PC-3 (cell line): ENCODE measurements at regions of chr4 and their contacts with region 1.

Region 1: DNA sequence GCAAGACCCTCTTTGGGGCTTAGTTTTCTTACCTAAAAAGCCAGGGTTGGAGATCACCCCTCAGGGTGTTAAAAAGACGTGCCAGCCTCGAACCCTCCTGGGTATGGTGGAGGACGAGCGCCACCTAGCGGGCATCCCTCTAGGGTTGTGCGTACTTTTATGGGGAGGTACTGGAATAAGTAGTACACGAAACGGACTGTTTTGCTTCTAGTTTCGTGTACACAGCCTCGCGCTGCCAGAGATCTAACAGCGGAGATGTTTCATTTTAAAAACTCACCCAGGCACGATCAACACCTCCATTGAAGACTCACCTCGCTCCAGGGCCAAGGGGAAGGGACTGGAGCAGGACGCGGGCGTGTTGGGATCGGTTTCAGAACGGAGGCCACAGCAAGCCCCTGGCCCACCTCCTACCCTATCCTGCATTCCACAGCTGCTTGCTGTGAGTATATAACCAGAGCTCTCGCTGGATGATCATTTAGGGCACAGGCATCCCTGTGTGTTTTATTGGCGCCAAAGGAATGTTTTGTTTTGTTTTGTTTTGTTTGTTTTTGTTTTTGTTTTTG is 4.8 kb upstream of the NKX3-2 start:
- DNase-seq: peak; percentile 81
- ATAC-seq: peak; percentile 49
- H3K4me3 ChIP-seq: peak overlapping the region; percentile 90
- H3K27ac ChIP-seq: no peak overlapping the region
- H3K4me1 ChIP-seq: peaks cover 8% of the 10 kb centered on the region
- H3K27me3 ChIP-seq: peaks cover 25% of the 10 kb centered on the region
- CTCF ChIP-seq: peak; percentile 89

Region 2: DNA sequence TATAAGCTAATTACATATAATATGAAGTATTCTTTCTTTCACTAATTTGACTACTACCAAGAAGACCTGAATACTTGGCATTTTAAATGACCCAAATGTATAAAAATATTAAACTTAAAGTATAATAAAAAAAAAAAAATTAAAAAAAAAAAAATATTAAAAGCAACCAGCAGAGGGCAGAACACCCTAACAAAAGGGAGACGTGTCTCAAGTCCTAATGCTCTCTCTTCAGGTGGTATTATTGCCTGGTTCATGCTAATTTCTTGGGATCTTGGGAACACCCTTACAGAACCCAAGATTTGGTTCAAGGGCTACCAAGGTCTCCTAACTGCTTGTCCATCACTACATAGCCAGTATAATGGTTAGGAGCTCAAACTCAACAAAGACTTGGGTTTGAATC is 819.7 kb before region 1 on chr4:
- CTCF ChIA-PET with region 1: no interaction called
- POLR2A ChIA-PET with region 1: no interaction called
- intact Hi-C with region 1: loop called (anchors 2 kb)
- DNase-seq: peak; percentile 35
- ATAC-seq: no peak
- H3K4me3 ChIP-seq: no peak overlapping the region
- H3K27ac ChIP-seq: no peak overlapping the region
- H3K4me1 ChIP-seq: no peaks in the 10 kb centered on the region
- H3K27me3 ChIP-seq: no peaks in the 10 kb centered on the region
- CTCF ChIP-seq: peak; percentile 17; the same call in 1 of the 2 replicates

Region 3: DNA sequence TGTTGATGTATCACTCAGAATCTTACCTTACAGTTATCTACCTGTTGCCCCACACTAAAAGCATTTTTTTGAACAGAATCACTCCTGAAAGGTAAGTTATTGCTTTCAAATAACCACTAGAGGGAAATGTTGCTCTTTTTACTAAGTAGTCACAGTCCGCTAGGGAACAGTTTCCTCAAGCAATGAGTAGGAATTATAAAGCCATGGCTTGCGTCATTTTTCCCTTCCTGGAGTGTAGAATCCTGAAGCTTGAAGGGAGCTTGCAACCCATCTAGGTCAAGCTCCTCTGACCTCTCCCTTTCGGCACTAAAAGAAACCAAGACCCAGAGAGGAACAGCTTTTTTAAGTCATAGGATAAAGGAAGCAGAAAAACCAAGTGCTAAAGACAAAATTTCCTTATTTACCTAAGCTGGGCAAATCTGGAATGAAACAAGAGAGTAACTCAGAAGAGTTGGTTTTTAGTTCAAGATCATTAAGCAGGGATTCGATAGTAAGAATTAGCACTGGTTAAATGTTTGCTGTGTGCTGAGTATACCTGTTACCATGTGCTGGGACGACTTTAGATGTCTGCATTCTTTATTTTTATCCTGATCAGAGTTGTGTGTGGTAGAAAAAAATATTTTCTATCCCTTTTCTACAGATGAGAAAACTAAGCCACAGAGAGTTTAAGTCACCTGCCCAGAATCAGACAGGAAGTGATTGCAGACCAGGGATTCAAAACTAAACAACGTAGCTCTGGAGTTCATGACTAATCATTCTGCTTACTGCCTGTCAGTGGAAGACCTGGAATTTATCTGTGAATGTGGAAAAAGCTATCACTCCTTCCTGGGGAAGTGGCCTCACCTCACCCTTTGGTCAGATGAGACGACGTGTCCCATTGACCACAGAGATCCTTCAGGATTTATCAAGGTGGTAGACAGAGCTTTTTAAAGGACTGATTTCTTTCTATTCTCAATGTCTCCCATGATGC is 696.4 kb before region 1 on chr4:
- CTCF ChIA-PET with region 1: no interaction called
- POLR2A ChIA-PET with region 1: no interaction called
- intact Hi-C with region 1: loop called (anchors 1 kb)
- DNase-seq: peak; percentile 73
- ATAC-seq: peak; percentile 79
- H3K4me3 ChIP-seq: no peak overlapping the region
- H3K27ac ChIP-seq: no peak overlapping the region
- H3K4me1 ChIP-seq: no peaks in the 10 kb centered on the region
- H3K27me3 ChIP-seq: peaks cover 2% of the 10 kb centered on the region; the same call in 1 of the 2 replicates
- CTCF ChIP-seq: peak; percentile 70

Region 4: DNA sequence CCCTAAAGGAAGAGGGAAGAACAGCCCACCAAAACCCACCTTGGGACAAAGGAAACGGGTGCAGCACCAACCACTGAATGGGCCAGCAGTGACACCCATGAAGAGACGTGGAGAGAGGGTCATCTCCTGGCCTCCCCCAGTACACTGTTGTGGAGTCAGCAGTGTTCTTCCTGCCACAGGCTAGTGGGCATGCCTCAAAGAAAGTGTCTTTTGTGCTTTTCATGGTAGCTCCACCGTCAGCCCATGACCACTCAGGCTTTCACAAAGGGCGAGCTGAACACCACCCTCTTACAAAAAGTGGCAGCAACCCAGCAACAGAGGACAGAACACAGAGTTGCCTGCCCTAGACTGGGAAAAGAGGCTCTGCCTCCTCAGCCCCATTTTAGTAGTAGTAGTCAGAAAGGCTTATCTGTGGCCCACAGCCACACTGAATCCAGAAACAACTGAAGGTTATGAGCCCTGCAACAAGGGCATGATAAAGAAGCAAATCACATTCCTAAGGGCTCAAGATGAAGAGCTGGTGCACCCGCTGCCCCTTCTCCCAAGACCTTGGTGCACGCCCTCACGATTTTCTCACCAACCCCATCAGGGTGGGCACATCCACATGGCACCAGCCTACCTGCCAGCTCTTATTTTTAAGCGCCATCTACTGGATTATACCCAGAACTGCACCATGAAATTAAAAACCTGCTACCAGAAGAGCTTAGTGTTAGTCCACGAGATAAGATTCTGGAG is 118.1 kb before region 1 on chr4:
- CTCF ChIA-PET with region 1: no interaction called
- POLR2A ChIA-PET with region 1: no interaction called
- intact Hi-C with region 1: no loop called
- DNase-seq: peak; percentile 8
- ATAC-seq: no peak
- H3K4me3 ChIP-seq: no peak overlapping the region
- H3K27ac ChIP-seq: no peak overlapping the region
- H3K4me1 ChIP-seq: no peaks in the 10 kb centered on the region
- H3K27me3 ChIP-seq: no peaks in the 10 kb centered on the region
- CTCF ChIP-seq: peak; percentile 59

Region 5: GRCh38 chr4:13484122-13484748 is 64.8 kb before region 1 on chr4 and contains the start of gene RAB28:
- CTCF ChIA-PET with region 1: no interaction called
- POLR2A ChIA-PET with region 1: no interaction called
- intact Hi-C with region 1: loop called (anchors 5 kb)
- DNase-seq: peak; percentile 82
- ATAC-seq: peak; percentile 79
- H3K4me3 ChIP-seq: peak within 1 kb of the TSS; percentile 89
- H3K27ac ChIP-seq: peak within 1 kb of the TSS; percentile 74
- H3K4me1 ChIP-seq: peaks cover 18% of the 10 kb centered on the region
- H3K27me3 ChIP-seq: no peaks in the 10 kb centered on the region
- CTCF ChIP-seq: no peak
- total RNA-seq, gene RAB28: 4.9 and 10.4 TPM in 2 replicates

Region 6: DNA sequence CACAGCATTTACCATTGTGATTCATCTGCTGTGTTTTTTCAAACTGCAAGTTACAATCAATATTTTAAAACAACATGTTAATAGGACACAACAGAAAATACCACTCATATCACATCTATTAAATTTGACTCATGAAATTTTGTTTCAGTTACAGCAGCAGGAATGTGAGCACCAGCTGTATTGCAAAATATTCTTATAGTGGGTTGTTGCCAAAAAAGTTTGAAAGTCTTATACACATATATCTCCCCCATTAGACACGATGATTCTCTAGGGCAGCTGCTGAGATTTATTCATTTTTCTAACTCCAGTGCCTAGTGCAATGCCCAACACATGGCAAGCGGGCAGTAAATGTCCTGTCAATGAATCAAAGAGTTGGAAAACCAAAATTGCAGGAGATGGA is 21.9 kb after region 1 on chr4:
- CTCF ChIA-PET with region 1: no interaction called
- POLR2A ChIA-PET with region 1: no interaction called
- intact Hi-C with region 1: no loop called
- DNase-seq: no peak
- ATAC-seq: no peak
- H3K4me3 ChIP-seq: no peak overlapping the region
- H3K27ac ChIP-seq: no peak overlapping the region
- H3K4me1 ChIP-seq: no peaks in the 10 kb centered on the region
- H3K27me3 ChIP-seq: no peaks in the 10 kb centered on the region
- CTCF ChIP-seq: no peak